BJ (cell line): ENCODE measurements at regions of chr12 and their contacts with region 1.

Region 1: GRCh38 chr12:105084251-105085250 is at the start of gene ALDH1L2:
- DNase-seq: peak; percentile 29
- H3K4me3 ChIP-seq: peak within 1 kb of the TSS; percentile 94
- H3K27me3 ChIP-seq: no peaks in the 10 kb centered on the region
- CTCF ChIP-seq: no peak
- polyA plus RNA-seq, gene ALDH1L2: 76.1 and 129 TPM in 2 replicates

Region 2: GRCh38 chr12:104219361-104219892 is 865.1 kb before region 1 on chr12:
- CTCF ChIA-PET with region 1: no interaction called
- POLR2A ChIA-PET with region 1: interaction called, 10 read pairs
- DNase-seq: peak; percentile 98
- H3K4me3 ChIP-seq: no peak overlapping the region
- H3K27me3 ChIP-seq: no peaks in the 10 kb centered on the region
- CTCF ChIP-seq: no peak

Region 3: DNA sequence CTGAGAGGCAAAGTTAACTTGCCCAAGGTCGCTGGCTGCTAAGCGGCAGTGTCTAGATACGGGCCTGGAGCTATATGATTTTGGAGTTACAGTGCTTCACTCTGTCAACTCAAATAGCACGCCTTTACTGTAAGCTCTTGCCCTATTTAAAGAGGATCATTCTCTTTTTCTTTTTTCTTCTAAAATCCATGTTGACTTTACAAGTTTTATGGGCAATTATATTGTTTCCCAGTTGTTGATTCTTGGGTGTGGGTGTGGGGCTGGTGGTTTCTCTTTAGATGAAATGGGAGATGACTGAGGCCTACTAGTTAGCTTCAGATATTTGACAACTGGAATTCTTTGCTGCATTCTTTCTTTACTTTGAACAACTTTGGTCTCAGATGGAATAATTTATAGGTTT is 316.6 kb after region 1 on chr12:
- CTCF ChIA-PET with region 1: no interaction called
- POLR2A ChIA-PET with region 1: interaction called, 14 read pairs
- DNase-seq: no peak
- H3K4me3 ChIP-seq: no peak overlapping the region
- H3K27me3 ChIP-seq: no peaks in the 10 kb centered on the region
- CTCF ChIP-seq: no peak